ENCODE measurements at regions of chr17 and their contacts with region 1.

Region 1: DNA sequence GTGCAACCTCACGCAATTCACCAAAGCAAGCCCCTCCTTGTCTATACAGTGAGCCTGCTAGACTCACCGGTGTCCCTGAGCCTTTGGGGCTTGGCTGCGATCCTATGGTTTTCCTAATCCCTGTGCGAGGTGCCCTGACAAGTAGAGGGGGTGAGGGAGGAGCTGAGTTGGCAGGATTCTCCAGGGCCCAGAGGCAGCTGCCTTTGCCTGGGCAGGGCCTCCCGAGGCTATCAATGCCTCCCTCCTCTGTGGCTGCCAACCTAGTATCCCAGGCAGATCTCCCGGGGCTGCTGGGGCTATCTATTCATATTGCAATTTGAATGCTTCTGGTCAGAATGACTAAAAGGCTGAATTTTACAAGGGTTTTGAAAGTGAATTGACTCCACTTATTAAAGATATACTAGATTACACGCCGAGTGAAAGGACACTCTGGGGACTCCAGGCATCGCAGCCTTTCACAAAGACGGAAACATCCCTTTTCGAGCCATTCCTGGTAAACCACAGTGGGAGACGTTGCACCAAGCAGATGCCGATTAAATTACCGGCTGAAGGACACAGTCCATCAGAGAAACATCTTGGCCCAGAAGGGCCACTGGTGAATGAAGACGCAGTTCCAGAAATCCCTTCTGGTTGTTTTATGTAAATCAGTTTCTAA is 11.3 kb upstream of the PITPNM3 start:
- DNase-seq: peak; percentile 67
- H3K4me3 ChIP-seq: no peak overlapping the region
- H3K27ac ChIP-seq: peak overlapping the region in 3 of 4 donors; percentile 44 to 64 (median 52)
- H3K4me1 ChIP-seq: peaks cover 0 to 24% (median 17%) of the 10 kb centered on the region in 4 donors
- H3K27me3 ChIP-seq: no peaks in the 10 kb centered on the region
- CTCF ChIP-seq: no peak
- EP300 ChIP-seq: no peak
- POLR2A ChIP-seq: no peak

Region 2: GRCh38 chr17:6546069-6546718 is 21.5 kb before region 1 on chr17:
- intact Hi-C with region 1: loop called (anchors 2 kb)
- DNase-seq: no peak
- H3K4me3 ChIP-seq: no peak overlapping the region
- H3K27ac ChIP-seq: peak overlapping the region in 1 of 4 donors; percentile 20
- H3K4me1 ChIP-seq: peaks cover 0 to 24% (median 20%) of the 10 kb centered on the region in 4 donors
- H3K27me3 ChIP-seq: no peaks in the 10 kb centered on the region
- CTCF ChIP-seq: no peak
- EP300 ChIP-seq: no peak
- POLR2A ChIP-seq: no peak

Region 3: DNA sequence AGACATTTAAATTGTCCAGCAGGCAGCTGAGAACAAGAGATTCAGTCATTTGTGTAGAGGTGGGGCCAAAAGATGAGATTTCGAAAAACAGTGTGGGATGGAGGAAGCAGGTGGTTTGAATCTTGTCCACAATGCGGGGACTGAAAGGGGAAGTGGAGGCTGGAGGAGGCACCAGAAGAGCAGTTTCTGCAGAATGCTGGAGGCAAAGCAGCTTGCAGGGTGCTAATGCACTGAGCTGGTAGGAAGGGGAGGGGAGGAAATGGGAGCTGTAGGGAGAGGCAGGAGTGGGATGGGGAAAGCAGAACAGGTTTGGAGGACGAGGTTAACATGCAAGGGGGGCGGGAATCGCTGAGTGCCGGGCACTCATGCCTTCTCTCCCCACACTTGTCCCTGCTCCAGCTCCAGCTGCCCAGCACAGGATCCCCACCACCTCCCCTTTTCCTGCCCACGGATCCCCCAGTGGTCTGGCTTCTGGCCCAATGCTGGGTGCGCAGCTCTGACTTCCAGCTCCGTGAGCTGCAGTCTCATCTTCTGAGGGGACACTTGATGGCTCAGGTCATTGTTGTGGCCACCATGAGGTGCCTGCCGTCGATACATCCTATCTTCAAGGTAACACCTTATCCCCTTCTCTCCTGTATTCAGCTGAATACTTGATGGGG is 93.3 kb after region 1 on chr17:
- intact Hi-C with region 1: no loop called
- DNase-seq: no peak
- H3K4me3 ChIP-seq: no peak overlapping the region
- H3K27ac ChIP-seq: no peak overlapping the region
- H3K4me1 ChIP-seq: no peaks in the 10 kb centered on the region
- H3K27me3 ChIP-seq: peaks cover 0 to 46% (median 10%) of the 10 kb centered on the region in 3 donors
- CTCF ChIP-seq: no peak
- EP300 ChIP-seq: no peak
- POLR2A ChIP-seq: no peak

Measured in sigmoid colon (tissue), 7 donors.